Pancreas (tissue), 10 donors: ENCODE measurements at regions of chr5 and their contacts with region 1.

Region 1: DNA sequence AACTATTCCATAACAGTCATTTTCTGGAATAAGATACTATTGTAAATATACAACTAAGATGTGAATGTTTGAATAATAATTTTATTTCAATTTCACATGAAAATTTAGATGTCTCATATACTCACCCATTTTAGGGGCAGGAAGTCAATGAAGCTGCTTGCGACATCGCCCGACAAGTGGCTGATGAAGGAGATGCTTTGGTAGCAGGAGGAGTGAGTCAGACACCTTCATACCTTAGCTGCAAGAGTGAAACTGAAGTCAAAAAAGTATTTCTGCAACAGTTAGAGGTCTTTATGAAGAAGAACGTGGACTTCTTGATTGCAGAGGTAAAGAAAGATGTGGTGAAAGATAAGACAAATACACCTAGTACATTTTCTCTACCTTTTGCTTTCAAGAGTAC is 8.6 kb downstream of the BHMT start:
- DNase-seq: no peak
- ATAC-seq: no peak
- H3K4me3 ChIP-seq: no peak overlapping the region
- H3K27ac ChIP-seq: no peak overlapping the region
- H3K4me1 ChIP-seq: no peaks in the 10 kb centered on the region
- H3K27me3 ChIP-seq: no peaks in the 10 kb centered on the region
- CTCF ChIP-seq: no peak

Region 2: GRCh38 chr5:79030663-79031484 is 89.3 kb before region 1 on chr5:
- intact Hi-C with region 1: loop called in 1 of 3 experiments (anchors 10 kb)
- DNase-seq: no peak
- ATAC-seq: peak in 1 of 4 donors; percentile 55
- H3K4me3 ChIP-seq: no peak overlapping the region
- H3K27ac ChIP-seq: no peak overlapping the region
- H3K4me1 ChIP-seq: no peaks in the 10 kb centered on the region
- H3K27me3 ChIP-seq: no peaks in the 10 kb centered on the region
- CTCF ChIP-seq: no peak